ENCODE measurements at regions of chr14 and their contacts with region 1.

Region 1: GRCh38 chr14:21367582-21368144 is 16.2 kb downstream of the SUPT16H start:
- DNase-seq: no peak
- H3K4me3 ChIP-seq: no peak overlapping the region
- H3K27ac ChIP-seq: no peak overlapping the region
- H3K4me1 ChIP-seq: no peaks in the 10 kb centered on the region
- H3K27me3 ChIP-seq: no peaks in the 10 kb centered on the region
- CTCF ChIP-seq: no peak
- POLR2A ChIP-seq: no peak

Region 2: DNA sequence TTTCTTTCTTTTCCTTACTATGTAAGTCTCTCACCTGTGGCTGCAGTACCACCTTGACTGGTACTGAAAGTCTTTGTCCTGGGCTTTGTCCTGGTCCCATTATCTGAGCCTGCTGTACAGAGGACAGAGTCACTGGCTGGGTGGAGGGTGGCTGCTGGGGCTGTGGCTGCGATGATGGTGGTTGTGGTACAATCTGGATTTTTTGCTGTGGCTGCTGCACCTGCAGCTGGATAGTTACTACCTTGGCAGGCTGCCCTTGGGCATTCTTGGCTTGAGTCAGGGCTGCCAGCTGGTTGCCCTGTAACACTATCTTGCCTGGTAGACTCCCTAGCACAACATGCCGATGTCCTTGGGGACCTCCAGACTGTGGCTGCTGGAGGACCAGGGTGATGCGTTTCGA is 61.3 kb after region 1 on chr14:
- intact Hi-C with region 1: loop called (anchors 10 kb)
- DNase-seq: no peak
- H3K4me3 ChIP-seq: no peak overlapping the region
- H3K27ac ChIP-seq: no peak overlapping the region
- H3K4me1 ChIP-seq: no peaks in the 10 kb centered on the region
- H3K27me3 ChIP-seq: no peaks in the 10 kb centered on the region
- CTCF ChIP-seq: no peak
- POLR2A ChIP-seq: no peak